ENCODE measurements at regions of chr2 and their contacts with region 1.

Region 1: DNA sequence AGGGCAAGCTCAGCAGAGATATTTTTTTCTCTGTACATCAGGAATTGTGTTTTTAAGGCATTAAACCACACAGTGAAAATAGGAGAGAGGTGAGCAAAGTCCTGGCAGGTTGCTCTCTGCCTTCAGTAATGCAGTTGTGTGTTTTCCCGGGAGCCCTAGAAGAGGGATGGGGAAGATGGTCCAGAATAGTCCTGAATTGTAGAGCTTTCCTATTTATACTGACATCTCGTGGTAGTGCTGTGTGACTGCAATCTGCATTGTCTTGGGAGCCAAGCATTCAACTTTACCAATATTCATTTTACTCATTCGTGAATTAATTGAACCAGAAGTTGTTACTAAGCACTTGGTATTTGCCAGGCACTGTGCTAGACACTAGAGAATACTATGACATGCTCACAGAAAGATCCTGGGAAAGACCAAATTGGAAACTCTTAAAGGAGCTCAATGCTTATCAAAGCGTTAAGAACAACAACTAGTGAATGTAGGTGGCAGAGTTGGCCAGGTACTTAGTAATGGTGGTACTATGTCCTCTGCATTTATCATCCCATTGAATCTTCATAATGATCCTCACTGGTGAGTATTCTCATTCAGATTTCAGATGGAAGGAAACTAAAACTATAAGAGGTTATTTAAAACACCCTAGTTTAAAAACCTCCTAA is 214.6 kb downstream of the TRIB2 start:
- DNase-seq: peak; percentile 75
- H3K4me3 ChIP-seq: no peak overlapping the region
- H3K27ac ChIP-seq: peak overlapping the region in 1 of 2 experiments; percentile 86; a peak in 2 of 4 replicates
- H3K4me1 ChIP-seq: peaks cover 26 to 35% of the 10 kb centered on the region in 2 experiments; a peak in 3 of 4 replicates
- H3K27me3 ChIP-seq: no peaks in the 10 kb centered on the region
- CTCF ChIP-seq: peak; percentile 99
- EP300 ChIP-seq: no peak
- RAD21 ChIP-seq: peak; percentile 89

Region 2: GRCh38 chr2:11829947-11830707 is 1101.2 kb before region 1 on chr2:
- CTCF ChIA-PET with region 1: interaction called, 37 read pairs
- POLR2A ChIA-PET with region 1: interaction called, 9 read pairs
- DNase-seq: peak; percentile 85
- H3K4me3 ChIP-seq: peak overlapping the region; percentile 27 to 32
- H3K27ac ChIP-seq: peak overlapping the region; percentile 94 to 95
- H3K4me1 ChIP-seq: peaks cover 38 to 40% of the 10 kb centered on the region in 2 experiments
- H3K27me3 ChIP-seq: no peaks in the 10 kb centered on the region
- CTCF ChIP-seq: peak; percentile 61
- EP300 ChIP-seq: peak in 1 of 2 experiments; percentile 99; a peak in 2 of 4 replicates
- RAD21 ChIP-seq: peak; percentile 85

Region 3: GRCh38 chr2:12897181-12897580 is 34.1 kb before region 1 on chr2:
- CTCF ChIA-PET with region 1: interaction called, 11 read pairs
- POLR2A ChIA-PET with region 1: no interaction called
- DNase-seq: no peak
- H3K4me3 ChIP-seq: no peak overlapping the region
- H3K27ac ChIP-seq: no peak overlapping the region
- H3K4me1 ChIP-seq: no peaks in the 10 kb centered on the region
- H3K27me3 ChIP-seq: no peaks in the 10 kb centered on the region
- CTCF ChIP-seq: no peak
- EP300 ChIP-seq: no peak
- RAD21 ChIP-seq: no peak

Region 4: DNA sequence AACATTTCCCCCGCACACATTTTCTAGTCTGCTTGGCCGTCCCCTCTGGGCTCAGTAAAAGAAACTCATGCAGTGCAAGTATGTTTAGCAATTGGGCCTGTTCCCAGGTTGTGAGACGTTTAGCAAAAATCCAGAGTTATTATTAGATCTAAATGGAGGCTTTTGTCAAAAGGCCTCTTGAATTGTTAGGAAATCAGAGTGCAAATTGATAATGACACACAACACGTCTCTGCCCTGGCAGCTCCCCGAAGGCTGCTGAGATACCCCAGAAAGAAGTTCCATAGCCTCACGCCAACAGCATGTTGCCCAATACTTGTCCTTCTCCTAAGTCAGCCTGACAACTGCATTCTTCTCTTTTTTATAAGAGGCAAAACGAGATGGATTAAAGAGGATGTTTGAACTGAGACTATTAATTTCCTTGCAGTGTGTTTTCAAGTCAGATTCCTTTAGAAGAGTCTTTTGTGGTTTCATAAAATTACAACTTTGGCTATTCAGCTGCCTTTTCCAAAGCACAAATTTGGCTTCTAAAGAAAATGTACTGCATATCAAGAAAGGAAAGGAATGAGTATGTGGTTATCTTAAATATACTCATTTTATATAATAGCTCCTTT is 12.4 kb before region 1 on chr2:
- CTCF ChIA-PET with region 1: interaction called, 61 read pairs
- POLR2A ChIA-PET with region 1: no interaction called
- DNase-seq: no peak
- H3K4me3 ChIP-seq: peak overlapping the region in 1 of 2 experiments; percentile 17; a peak in 1 of 4 replicates
- H3K27ac ChIP-seq: peak overlapping the region; percentile 65 to 79
- H3K4me1 ChIP-seq: peaks cover 3 to 20% of the 10 kb centered on the region in 2 experiments; a peak in 2 of 4 replicates
- H3K27me3 ChIP-seq: no peaks in the 10 kb centered on the region
- CTCF ChIP-seq: no peak
- EP300 ChIP-seq: peak; percentile 85 to 89; a peak in 3 of 4 replicates
- RAD21 ChIP-seq: no peak

Region 5: GRCh38 chr2:12970861-12971260 is 39.5 kb after region 1 on chr2:
- CTCF ChIA-PET with region 1: interaction called, 10 read pairs
- POLR2A ChIA-PET with region 1: no interaction called
- DNase-seq: no peak
- H3K4me3 ChIP-seq: no peak overlapping the region
- H3K27ac ChIP-seq: no peak overlapping the region
- H3K4me1 ChIP-seq: peaks cover 3 to 17% of the 10 kb centered on the region in 2 experiments
- H3K27me3 ChIP-seq: no peaks in the 10 kb centered on the region
- CTCF ChIP-seq: no peak
- EP300 ChIP-seq: 0 out of 4 replicates have a peak, but pooled peaks of 1 of the 2 experiments have one; percentile 26
- RAD21 ChIP-seq: no peak

Region 6: DNA sequence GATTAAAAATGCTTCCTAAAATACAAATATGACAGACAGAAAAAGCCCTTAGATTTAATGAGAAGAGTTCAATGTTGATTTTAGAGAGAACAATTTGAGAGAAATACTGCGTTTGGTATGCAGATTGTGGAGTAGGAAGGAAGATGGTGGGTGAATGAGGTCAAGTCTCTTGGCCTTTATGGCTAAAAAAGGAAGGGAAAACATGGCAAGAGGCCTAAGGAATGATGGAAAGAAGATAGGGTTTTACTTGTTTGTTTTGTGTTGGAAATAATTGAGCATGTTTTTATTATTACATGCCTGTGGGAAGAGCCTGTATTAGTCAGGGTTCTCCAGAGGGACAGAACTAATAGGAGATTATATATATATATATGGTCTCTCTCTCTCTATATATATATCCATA is 103.5 kb after region 1 on chr2:
- CTCF ChIA-PET with region 1: no interaction called
- POLR2A ChIA-PET with region 1: no interaction called
- DNase-seq: no peak
- H3K4me3 ChIP-seq: no peak overlapping the region
- H3K27ac ChIP-seq: no peak overlapping the region
- H3K4me1 ChIP-seq: no peaks in the 10 kb centered on the region
- H3K27me3 ChIP-seq: no peaks in the 10 kb centered on the region
- CTCF ChIP-seq: no peak
- EP300 ChIP-seq: no peak
- RAD21 ChIP-seq: no peak

Measured in SK-N-SH (cell line).